MCF 10A (cell line): ENCODE measurements at regions of chr19 and their contacts with region 1.

Region 1: DNA sequence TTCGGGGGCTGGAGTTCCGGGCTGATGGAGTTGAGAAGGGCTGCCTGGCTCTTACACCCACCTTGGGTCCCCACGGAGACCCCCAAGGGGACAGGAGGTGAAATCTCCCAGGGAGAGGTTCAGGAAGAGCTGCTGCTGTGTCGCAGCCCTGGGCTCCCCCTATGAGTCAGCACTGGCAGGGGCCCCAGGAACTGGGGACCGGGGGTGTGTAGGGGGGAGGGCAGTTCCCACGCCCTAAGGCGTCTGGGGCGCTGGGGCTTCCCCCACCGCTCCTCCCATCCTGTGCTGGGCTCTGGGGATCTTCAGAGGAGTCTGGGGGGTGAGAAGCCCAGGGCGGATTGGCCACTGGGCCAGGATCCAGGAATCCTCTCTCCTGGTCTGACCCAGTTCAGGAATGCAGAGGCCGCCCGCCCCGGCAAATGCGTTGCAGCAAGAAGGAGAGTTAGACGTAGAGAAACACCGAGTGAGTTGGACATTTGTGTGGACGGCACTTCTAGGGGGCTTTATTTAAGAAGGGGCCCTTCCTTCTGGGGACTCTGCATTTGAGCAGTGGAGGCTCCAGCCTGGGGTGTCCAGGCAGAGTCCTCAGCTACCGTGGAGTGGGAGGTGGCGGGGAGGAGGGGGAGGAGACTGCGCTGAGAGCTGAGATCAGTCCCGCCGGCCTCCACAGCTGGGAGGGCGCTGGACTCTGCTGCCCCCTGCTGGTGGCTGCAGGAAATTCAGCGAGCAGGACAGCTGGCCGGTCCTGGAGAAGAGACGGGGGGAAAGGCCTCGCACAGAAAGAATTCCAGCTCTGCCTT is 15.0 kb upstream of the NANOS3 start:
- DNase-seq: peak; percentile 90
- H3K4me3 Mint-ChIP-seq: peak overlapping the region; percentile 75
- H3K27ac Mint-ChIP-seq: peak overlapping the region; percentile 49
- H3K4me1 Mint-ChIP-seq: peaks cover 22% of the 10 kb centered on the region
- H3K27me3 Mint-ChIP-seq: peaks cover 23% of the 10 kb centered on the region
- CTCF ChIP-seq: peak; percentile 91

Region 2: DNA sequence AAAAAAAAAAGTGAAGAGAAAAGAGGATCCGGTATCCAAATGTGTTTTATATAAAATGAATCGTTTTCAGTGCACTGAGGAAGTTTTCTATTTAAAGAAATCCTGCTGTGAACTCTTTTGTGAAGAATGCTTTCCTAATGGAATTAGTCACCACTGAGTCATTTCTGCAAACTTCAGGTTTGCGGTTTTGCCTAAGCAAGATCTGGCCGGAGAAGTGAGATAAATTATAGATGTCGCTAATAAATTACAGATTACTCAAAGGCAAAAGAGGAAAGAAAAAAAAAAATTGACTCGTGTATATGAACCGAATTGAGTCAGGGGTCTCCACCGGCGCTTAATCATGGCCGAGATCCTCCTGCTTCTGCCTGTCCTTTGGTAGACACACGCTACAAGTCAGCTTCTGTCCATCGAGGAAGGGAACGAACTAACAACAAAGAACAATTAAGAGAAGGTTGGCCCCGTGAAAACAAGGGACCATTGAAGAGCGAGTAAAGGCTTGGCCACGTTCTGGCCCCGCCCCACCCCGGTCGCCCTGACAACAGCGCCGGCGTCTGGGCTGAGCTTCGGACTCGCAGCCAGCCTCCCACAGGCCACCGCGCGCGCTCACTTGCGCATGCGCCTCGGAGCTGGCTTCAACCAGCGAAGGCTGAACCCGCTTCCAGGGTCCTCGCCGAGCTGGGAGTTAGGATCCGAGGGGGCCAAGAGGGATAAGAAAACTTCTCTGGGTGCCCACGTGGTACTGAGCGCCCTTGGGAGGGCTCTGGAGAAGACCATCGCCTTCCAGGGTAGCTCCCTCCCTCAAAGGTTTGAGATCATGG is 130.6 kb before region 1 on chr19:
- CTCF ChIA-PET with region 1: interaction called, 5 read pairs
- POLR2A ChIA-PET with region 1: interaction called, 7 read pairs
- intact Hi-C with region 1: loop called (anchors 5 kb)
- DNase-seq: peak; percentile 95
- H3K4me3 Mint-ChIP-seq: peak overlapping the region; percentile 79
- H3K27ac Mint-ChIP-seq: peak overlapping the region; percentile 99
- H3K4me1 Mint-ChIP-seq: peaks cover 18% of the 10 kb centered on the region
- H3K27me3 Mint-ChIP-seq: no peaks in the 10 kb centered on the region
- CTCF ChIP-seq: no peak

Region 3: DNA sequence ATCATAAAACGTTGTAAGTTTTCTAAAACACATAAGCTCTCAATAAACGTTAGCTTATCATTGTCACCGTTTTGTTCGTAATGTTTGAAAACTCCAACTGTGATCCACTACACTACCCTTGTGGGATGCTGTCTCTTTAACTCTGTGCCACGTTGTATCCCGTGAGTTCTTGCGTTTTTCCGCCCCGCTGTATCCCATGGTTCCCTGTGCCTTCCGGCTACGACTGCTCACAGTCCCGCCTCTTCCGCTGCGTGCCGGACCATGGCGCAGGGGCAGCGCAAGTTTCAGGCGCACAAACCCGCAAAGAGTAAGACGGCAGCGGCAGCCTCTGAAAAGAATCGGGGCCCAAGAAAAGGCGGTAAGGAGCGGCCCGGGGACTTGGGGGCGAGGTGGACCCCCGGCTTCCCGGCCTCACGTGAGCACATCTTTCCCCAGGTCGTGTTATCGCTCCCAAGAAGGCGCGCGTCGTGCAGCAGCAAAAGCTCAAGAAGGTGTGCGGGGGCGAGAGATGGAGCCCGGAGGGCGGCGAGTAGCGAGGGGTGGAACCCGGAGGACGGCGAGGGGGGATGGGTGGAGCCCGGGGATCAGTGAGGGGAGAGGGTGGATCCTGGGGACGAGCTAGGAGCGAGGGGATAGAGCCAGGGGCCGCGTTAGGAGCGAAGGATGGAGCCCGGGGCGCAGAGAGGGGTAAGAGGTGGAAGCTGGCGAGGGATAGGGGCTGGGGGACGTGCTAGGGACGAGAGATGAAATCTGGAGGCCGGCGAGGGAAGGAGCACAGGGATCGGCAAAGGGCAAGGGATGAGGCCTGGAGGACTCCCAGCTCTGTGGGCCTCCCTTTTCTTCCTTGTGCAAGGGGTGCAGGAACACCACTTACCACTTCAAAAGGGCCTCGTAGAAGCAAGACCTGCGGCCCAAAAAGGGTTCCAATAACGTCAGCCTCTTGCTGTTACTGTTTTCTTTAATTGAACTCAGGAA is 87.4 kb before region 1 on chr19 and contains the start of gene C19orf53:
- CTCF ChIA-PET with region 1: interaction called, 7 read pairs
- POLR2A ChIA-PET with region 1: interaction called, 20 read pairs
- intact Hi-C with region 1: no loop called
- DNase-seq: peak; percentile 94
- H3K4me3 Mint-ChIP-seq: peak within 1 kb of the TSS; percentile 98
- H3K27ac Mint-ChIP-seq: peak within 1 kb of the TSS; percentile 94
- H3K4me1 Mint-ChIP-seq: peaks cover 14% of the 10 kb centered on the region
- H3K27me3 Mint-ChIP-seq: no peaks in the 10 kb centered on the region
- CTCF ChIP-seq: no peak
- total RNA-seq, gene C19orf53: 89.0 and 101 TPM in 2 replicates

Region 4: DNA sequence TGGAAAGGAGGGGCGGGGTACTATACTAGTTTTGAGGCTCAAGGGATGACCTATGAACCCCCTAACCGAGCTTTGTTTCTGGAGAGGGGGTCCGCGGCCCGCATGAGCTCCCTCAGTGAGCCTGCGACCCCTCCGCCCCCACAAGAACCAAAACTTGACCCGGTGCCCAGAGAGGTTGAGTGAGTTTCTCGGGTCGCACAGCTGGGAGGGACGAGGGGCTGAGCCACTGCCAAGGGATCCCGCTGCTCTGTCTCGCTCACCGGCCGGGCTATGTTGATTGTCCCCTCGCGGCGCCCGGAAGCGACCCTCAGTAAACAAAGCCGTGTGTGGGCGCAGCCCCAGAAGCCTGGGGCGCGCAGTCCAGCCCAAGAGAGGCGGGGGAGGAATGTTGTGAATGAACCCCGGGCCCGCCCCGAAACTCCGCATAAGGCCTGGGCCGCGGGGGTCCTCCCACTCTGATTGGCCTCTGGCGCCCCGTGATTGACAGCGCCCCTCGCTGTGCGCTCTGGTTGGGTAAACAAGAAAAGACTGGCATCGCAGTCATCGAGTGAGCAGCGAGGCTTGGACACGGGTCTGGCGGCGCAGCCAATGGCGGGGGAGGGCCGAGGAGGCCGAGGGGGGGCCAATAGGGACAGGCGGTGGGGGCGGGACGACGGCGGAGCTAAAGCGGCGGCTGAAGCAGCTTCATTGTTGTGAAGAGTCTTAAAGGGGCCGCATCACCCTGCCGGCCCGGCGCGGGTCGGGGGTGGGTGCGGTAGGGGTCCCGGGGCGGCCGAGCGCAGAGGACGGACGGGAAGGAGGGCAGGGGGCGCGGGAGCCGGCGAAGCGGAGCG is 67.0 kb before region 1 on chr19 and contains the start of gene ZSWIM4:
- CTCF ChIA-PET with region 1: interaction called, 18 read pairs
- POLR2A ChIA-PET with region 1: interaction called, 18 read pairs
- intact Hi-C with region 1: no loop called
- DNase-seq: peak; percentile 100
- H3K4me3 Mint-ChIP-seq: peak within 1 kb of the TSS; percentile 95
- H3K27ac Mint-ChIP-seq: peak within 1 kb of the TSS; percentile 93
- H3K4me1 Mint-ChIP-seq: peaks cover 22% of the 10 kb centered on the region
- H3K27me3 Mint-ChIP-seq: no peaks in the 10 kb centered on the region
- CTCF ChIP-seq: no peak
- total RNA-seq, gene ZSWIM4: 9.2 and 9.4 TPM in 2 replicates

Region 5: DNA sequence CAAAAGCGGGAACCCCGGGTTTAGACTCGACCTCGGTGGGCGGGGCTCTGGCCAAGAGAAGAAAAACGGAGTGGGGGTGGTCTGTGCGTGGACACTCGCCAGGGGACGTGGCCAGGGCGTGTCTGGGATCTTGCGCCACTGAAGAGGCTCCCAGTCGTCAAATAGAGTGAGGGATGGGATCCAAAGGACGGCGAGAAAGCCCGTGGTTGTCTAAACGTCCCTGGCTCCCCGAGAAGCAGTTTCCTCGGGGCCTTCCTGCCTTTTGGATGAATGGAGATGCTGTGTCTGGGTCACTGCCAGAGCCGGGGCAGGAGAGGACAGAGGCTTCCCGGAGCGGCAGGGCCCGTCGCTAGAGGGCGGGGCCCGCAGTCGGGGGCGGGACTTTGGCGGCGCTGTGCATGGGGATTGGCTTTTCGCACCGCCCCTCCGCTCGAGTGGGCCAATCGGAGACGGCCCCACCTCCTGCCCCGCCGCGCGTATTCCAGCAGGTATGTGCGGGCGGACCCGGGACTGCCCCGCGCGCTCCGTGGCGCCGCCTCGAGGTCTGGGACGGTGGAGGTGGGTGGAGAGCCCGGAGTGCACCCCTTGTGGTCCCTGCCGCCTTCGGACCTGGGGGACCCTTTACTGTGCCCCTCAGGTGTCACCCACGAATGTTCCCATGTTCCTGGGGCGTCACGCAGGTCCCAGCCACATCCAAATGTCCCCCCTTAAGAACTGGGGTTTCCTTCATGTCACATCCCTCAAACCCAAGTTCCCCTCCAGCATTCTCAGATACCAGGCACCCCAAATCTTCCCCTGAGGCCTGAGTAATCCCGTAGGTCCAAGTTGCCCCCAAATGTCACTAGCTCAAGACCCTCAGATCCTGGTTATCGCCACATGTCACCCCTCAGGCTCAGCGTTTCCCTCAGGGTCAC is 28.3 kb before region 1 on chr19:
- CTCF ChIA-PET with region 1: interaction called, 19 read pairs
- POLR2A ChIA-PET with region 1: interaction called, 265 read pairs
- intact Hi-C with region 1: no loop called
- DNase-seq: peak; percentile 94
- H3K4me3 Mint-ChIP-seq: peak overlapping the region; percentile 46
- H3K27ac Mint-ChIP-seq: peak overlapping the region; percentile 75
- H3K4me1 Mint-ChIP-seq: peaks cover 7% of the 10 kb centered on the region
- H3K27me3 Mint-ChIP-seq: no peaks in the 10 kb centered on the region
- CTCF ChIP-seq: peak; percentile 29

Region 6: GRCh38 chr19:13846557-13847406 is 15.2 kb before region 1 on chr19:
- CTCF ChIA-PET with region 1: interaction called, 15 read pairs
- POLR2A ChIA-PET with region 1: interaction called, 265 read pairs
- intact Hi-C with region 1: no loop called
- DNase-seq: peak; percentile 93
- H3K4me3 Mint-ChIP-seq: peak overlapping the region; percentile 58
- H3K27ac Mint-ChIP-seq: peak overlapping the region; percentile 100
- H3K4me1 Mint-ChIP-seq: peaks cover 30% of the 10 kb centered on the region
- H3K27me3 Mint-ChIP-seq: no peaks in the 10 kb centered on the region
- CTCF ChIP-seq: no peak